Heart right ventricle (tissue), 16 donors: ENCODE measurements at regions of chr11 and their contacts with region 1.

Region 1: DNA sequence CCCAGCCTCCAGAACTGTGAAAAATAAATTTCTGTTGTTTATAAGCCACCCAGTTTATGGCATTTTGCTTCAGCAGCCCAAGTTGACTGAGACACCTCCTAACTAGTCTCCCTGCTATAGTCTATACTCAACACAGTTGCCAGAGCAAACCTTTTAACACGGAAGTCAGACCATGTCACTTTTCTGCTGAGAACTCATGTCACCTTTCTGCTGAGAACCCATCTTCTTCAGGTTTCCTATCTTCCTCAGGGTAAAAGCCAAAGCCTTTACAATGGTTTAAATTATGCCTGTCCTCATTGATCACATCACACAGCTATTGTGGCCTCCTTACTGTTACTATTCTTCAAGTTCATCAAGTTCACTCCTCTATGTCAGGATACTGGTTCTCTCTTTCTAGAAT is 74.3 kb upstream of the SOX6 start:
- DNase-seq: no peak
- ATAC-seq: no peak
- H3K4me3 ChIP-seq: no peak overlapping the region
- H3K27ac ChIP-seq: no peak overlapping the region
- H3K4me1 ChIP-seq: no peaks in the 10 kb centered on the region
- H3K27me3 ChIP-seq: no peaks in the 10 kb centered on the region
- CTCF ChIP-seq: no peak

Region 2: DNA sequence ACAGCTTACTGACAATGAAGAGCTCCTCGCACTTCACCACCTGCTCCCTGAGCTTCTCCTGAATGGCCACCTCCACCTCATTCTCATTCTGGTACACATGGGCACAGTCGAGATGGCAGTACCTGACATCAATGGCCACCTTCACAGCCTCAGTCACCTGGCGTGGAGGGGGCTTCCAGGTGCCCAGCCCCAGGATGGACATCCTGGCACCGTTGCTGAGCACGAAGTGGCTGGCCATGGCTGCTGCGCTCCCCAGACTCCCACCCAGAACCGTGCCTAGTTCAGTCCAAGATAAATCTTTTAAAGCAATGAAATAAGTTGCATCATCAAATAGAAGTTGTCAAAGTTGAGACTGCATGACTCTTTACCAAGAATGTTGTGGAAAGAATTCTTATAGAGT is 53.8 kb after region 1 on chr11:
- intact Hi-C with region 1: loop called in 1 of 10 experiments (anchors 2 kb)
- DNase-seq: no peak
- ATAC-seq: peak in 1 of 8 donors; percentile 28
- H3K4me3 ChIP-seq: no peak overlapping the region
- H3K27ac ChIP-seq: no peak overlapping the region
- H3K4me1 ChIP-seq: peaks cover 0 to 28% (median 10%) of the 10 kb centered on the region in 9 donors
- H3K27me3 ChIP-seq: no peaks in the 10 kb centered on the region
- CTCF ChIP-seq: no peak